MCF 10A (cell line): ENCODE measurements at regions of chr5 and their contacts with region 1.

Region 1: DNA sequence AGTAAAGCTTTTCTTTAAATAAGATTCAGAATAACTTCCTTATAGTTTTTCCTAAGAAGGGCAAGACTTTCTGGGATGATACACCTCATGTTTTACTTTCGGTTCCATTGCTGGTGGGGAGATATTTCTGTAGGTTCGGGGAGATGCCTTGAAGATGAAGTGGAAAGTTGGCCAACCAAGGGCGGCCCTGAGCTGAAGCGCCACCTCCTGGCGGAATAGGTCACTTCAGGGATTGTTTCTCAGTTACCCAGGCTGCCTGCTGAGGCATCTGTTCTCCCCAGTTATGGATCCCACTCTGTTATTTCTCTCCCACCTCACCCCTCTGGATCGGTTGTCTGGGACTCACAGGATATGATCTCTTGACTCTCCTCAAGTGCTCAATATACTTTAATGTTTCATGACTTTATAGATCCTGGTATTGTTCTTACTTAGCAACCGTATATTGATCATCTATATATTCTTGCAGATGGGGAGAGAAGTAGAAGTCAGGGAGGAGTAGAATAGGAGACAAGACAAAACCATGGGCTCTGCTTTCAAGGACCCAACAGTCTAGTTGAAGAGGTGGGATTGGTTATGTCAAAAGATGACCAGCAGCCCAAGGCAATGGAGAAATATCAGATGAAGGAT is 23.4 kb downstream of the MEGF10 start:
- DNase-seq: peak; percentile 83
- H3K4me3 Mint-ChIP-seq: no peak overlapping the region
- H3K27ac Mint-ChIP-seq: no peak overlapping the region
- H3K4me1 Mint-ChIP-seq: no peaks in the 10 kb centered on the region
- H3K27me3 Mint-ChIP-seq: peaks cover 26% of the 10 kb centered on the region
- CTCF ChIP-seq: peak; percentile 93

Region 2: DNA sequence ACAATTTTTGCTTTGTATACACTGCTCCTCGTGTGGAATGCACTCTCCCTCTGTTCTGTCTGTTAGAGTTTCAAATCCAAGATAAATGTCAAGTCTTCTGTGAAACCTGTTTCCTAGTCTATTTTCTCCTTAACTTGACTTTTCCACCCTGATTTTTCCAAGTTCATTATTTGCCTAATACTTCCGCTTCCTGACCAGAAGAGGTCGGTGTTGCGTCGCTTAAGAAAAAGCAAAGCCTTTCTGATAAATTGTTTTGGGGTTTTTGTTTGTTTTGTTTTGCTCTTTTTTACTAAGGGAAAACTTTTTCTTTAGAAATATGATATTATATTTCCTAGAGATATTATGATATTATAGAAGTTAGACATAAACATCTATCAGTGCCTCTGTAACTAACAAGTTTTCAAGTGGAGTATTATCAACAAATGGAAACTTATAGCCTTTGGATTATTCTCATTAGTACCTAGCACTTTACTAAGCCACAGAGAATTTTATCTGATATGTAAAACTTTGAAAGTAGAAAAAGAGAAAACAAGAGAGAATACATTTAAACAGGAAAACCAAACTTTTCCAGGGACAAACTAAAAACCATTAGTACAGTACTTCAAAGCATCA is 657.5 kb before region 1 on chr5:
- CTCF ChIA-PET with region 1: interaction called, 7 read pairs
- POLR2A ChIA-PET with region 1: interaction called, 3 read pairs
- intact Hi-C with region 1: loop called (anchors 10 kb)
- DNase-seq: peak; percentile 67
- H3K4me3 Mint-ChIP-seq: no peak overlapping the region
- H3K27ac Mint-ChIP-seq: no peak overlapping the region
- H3K4me1 Mint-ChIP-seq: no peaks in the 10 kb centered on the region
- H3K27me3 Mint-ChIP-seq: no peaks in the 10 kb centered on the region
- CTCF ChIP-seq: peak; percentile 98

Region 3: DNA sequence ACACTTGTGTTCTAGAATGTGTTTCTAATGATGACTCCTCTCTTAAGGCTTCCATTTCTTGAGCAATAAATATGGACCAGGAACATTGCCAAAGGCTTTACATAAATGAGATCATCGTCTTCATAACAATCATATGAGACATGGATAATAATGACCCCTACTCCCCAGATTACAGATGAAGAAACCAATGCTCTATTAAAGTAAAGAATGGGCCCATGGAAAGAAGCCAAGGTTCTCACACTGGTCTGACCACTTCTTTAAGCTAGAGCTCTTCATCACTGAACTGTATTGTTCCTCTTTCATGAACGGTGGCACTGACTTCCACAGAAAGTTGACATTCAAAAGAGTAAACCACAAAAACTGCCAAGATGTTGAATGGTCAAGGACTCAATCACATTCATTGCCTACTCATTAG is 348.9 kb before region 1 on chr5:
- CTCF ChIA-PET with region 1: no interaction called
- POLR2A ChIA-PET with region 1: no interaction called
- intact Hi-C with region 1: loop called (anchors 5 kb)
- DNase-seq: peak; percentile 77
- H3K4me3 Mint-ChIP-seq: no peak overlapping the region
- H3K27ac Mint-ChIP-seq: peak overlapping the region; percentile 36
- H3K4me1 Mint-ChIP-seq: peaks cover 30% of the 10 kb centered on the region
- H3K27me3 Mint-ChIP-seq: no peaks in the 10 kb centered on the region
- CTCF ChIP-seq: no peak

Region 4: DNA sequence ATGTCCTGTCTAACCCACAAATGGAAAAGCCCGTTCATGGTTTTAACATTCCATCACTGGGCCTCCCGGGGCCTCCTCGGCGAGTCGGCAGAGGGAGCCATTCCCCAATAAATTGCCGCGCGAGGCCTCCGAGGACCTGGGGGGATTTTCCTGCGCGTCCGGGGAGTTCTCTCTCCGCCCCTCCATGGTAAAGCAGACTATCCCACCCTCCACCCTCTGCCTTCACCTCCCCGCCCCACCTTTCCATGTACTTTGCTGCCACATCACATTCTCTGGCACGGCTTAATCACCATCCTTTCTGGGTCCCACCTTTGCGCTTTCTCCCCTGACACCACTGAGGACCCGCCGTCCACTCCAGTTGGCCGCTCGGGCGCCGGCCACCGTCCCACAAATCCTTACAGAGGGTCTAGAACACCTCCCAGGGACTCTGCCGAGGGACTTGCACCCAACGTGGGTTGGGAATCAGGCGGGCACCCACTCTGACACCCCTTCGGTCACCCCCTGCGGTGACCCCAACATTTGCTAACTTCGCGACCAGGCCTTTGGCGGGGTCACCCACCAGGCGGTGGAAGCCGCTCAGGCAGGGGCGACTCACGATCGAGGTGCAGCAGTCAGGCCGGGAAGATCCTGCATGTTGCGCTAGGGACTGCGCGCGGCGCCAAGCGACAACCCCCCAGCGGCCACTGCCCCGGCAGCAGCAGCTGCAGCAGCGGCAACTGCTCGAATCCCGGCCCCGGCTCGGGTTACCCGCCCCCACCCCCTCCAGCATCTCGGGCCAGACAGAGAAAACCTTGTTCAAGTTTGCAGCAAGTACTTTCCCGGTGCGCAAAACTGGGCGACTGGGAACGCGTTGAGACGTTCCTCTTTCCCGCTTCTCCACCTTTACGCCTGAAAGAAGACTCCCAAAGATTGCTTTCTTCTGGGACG is 23.7 kb before region 1 on chr5 and contains the start of gene MEGF10:
- CTCF ChIA-PET with region 1: interaction called, 3 read pairs
- POLR2A ChIA-PET with region 1: no interaction called
- intact Hi-C with region 1: loop called (anchors 1 kb)
- DNase-seq: peak; percentile 44
- H3K4me3 Mint-ChIP-seq: peak within 1 kb of the TSS; percentile 43
- H3K27ac Mint-ChIP-seq: no peak within 1 kb of the TSS
- H3K4me1 Mint-ChIP-seq: no peaks in the 10 kb centered on the region
- H3K27me3 Mint-ChIP-seq: no peaks in the 10 kb centered on the region
- CTCF ChIP-seq: peak; percentile 74
- total RNA-seq, gene MEGF10: not detected in 2 replicates

Region 5: GRCh38 chr5:127326428-127326827 is 12.5 kb after region 1 on chr5:
- CTCF ChIA-PET with region 1: interaction called, 15 read pairs
- POLR2A ChIA-PET with region 1: no interaction called
- intact Hi-C with region 1: no loop called
- DNase-seq: no peak
- H3K4me3 Mint-ChIP-seq: no peak overlapping the region
- H3K27ac Mint-ChIP-seq: no peak overlapping the region
- H3K4me1 Mint-ChIP-seq: peaks cover 9% of the 10 kb centered on the region
- H3K27me3 Mint-ChIP-seq: peaks cover 13% of the 10 kb centered on the region
- CTCF ChIP-seq: no peak

Region 6: DNA sequence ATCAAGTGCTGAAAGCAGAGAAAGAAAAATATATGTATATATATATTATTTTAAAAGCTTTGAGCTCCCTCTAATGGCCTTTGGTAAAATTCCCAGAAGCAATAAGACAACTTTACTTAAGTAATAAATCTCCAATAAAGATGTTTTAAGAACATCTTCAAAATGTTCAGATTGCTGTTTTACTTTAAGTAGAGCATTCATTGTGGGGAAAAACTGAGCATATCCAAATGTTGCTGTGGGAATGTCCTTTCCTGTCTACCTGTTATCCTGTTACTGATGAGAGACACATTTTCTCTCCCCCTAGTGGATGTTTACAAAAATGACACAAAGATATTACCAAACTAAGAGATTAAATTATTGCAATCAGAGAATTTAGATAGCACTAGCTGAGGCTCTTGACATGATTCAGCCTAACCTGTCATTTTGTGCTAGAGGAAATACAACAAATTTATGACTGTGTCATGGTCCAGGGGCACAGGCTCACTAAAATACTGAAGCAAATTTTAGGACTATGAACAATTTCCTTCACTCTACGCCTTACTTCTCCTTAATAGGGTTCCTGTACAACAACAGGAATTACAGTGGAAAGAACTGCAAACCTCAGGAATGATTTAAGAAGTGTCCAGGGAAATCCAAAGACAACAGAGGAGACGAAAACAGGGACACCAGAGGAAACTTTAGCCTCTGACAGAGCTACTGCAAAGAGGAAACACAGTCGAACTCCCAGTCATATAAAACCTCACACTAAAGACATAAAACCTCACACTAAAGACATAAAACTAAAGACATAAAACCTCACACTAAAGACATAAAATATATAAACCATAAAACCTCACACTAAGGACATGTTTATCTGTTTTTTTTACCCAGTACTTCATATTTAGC is 179.1 kb after region 1 on chr5:
- CTCF ChIA-PET with region 1: interaction called, 8 read pairs
- POLR2A ChIA-PET with region 1: interaction called, 3 read pairs
- intact Hi-C with region 1: loop called (anchors 5 kb)
- DNase-seq: peak; percentile 75
- H3K4me3 Mint-ChIP-seq: no peak overlapping the region
- H3K27ac Mint-ChIP-seq: no peak overlapping the region
- H3K4me1 Mint-ChIP-seq: no peaks in the 10 kb centered on the region
- H3K27me3 Mint-ChIP-seq: peaks cover 82% of the 10 kb centered on the region
- CTCF ChIP-seq: peak; percentile 95

Region 7: GRCh38 chr5:127683008-127683407 is 369.0 kb after region 1 on chr5:
- CTCF ChIA-PET with region 1: no interaction called
- POLR2A ChIA-PET with region 1: no interaction called
- intact Hi-C with region 1: no loop called
- DNase-seq: peak; percentile 86
- H3K4me3 Mint-ChIP-seq: no peak overlapping the region
- H3K27ac Mint-ChIP-seq: no peak overlapping the region
- H3K4me1 Mint-ChIP-seq: peaks cover 32% of the 10 kb centered on the region
- H3K27me3 Mint-ChIP-seq: no peaks in the 10 kb centered on the region
- CTCF ChIP-seq: no peak